Dorsolateral prefrontal cortex (tissue), 120 donors: ENCODE measurements at regions of chr1 and their contacts with region 1.

Region 1: GRCh38 chr1:62175568-62176179 is 19.0 kb upstream of the L1TD1 start:
- DNase-seq: peak in 4 of 10 donors; percentile 15 to 52 (median 39)
- H3K4me3 ChIP-seq: no peak overlapping the region
- H3K27ac ChIP-seq: no peak overlapping the region
- H3K27me3 ChIP-seq: peaks cover 0 to 6% (median 0%) of the 10 kb centered on the region in 45 donors
- CTCF ChIP-seq: peak; percentile 64 to 96 (median 82)

Region 2: GRCh38 chr1:62407405-62408009 is 231.8 kb after region 1 on chr1:
- intact Hi-C with region 1: loop called (anchors 1 to 2 kb)
- DNase-seq: peak in 2 of 10 donors; percentile 14 to 21
- H3K4me3 ChIP-seq: no peak overlapping the region
- H3K27ac ChIP-seq: no peak overlapping the region
- H3K27me3 ChIP-seq: peaks cover 0 to 10% (median 0%) of the 10 kb centered on the region in 45 donors
- CTCF ChIP-seq: peak in 55 of 56 donors; percentile 65 to 98 (median 88)